Activated T-helper 1 cell treated with anti-CD3 and anti-CD28 coated beads, Interleukin-12 subunit alpha, Interleukin-12 subunit beta, Interleukin-2, Interleukin-4 antibody, amounts not matched to agents 30 ng/mL and 10 ng/mL and 1 ng/mL, durations not matched to agents 14 hours and 24 hours and 36 hours (primary cell): ENCODE measurements at regions of chr14 and their contacts with region 1.

Region 1: DNA sequence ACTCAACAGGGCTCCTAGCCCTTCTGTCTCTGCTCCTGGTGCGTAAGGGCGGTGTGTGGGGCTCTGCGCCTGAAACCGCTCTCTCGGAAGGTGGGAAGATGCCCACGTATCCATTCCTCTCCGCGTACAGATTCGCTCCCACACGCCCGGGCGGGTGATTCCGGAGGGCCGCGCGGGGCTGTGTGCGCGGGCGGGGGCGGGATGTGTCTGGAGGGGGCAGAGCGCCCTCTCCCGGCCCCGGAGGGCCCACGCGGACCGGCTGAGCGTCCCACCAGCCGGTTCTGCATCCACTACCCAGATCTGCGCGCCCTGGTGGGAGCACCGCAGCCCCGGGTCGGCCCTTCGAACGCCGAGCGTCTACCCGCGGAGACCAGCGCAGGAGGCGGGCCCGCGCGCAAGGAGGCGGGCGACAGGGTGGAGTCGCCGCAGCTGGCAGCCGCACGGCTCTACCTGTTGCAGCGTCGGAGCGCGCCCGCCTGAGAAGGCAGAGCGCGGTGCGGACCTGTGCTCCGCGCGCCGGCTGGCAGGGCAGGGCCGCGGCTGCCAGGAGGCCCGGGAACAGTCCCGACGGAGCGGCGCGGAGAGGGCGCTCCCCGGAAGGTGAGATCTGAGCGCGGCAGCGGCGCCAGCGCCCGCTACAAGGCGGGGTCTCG is 1.4 kb upstream of the KCNK13 start:
- DNase-seq: peak; percentile 51
- H3K4me3 Mint-ChIP-seq: peak overlapping the region; percentile 73
- H3K27ac Mint-ChIP-seq: no peak overlapping the region
- H3K4me1 Mint-ChIP-seq: peaks cover 30% of the 10 kb centered on the region
- H3K27me3 Mint-ChIP-seq: peaks cover 71% of the 10 kb centered on the region

Region 2: GRCh38 chr14:89973234-89973823 is 87.1 kb before region 1 on chr14:
- intact Hi-C with region 1: loop called (anchors 1 kb)
- DNase-seq: peak; percentile 25
- H3K4me3 Mint-ChIP-seq: no peak overlapping the region
- H3K27ac Mint-ChIP-seq: no peak overlapping the region
- H3K4me1 Mint-ChIP-seq: peaks cover 5% of the 10 kb centered on the region
- H3K27me3 Mint-ChIP-seq: no peaks in the 10 kb centered on the region

Region 3: GRCh38 chr14:90235179-90235976 is 174.9 kb after region 1 on chr14:
- intact Hi-C with region 1: loop called (anchors 2 kb)
- DNase-seq: peak; percentile 59
- H3K4me3 Mint-ChIP-seq: no peak overlapping the region
- H3K27ac Mint-ChIP-seq: no peak overlapping the region
- H3K4me1 Mint-ChIP-seq: no peaks in the 10 kb centered on the region
- H3K27me3 Mint-ChIP-seq: peaks cover 5% of the 10 kb centered on the region